Activated CD4-positive, alpha-beta T cell treated with anti-CD3 and anti-CD28 coated beads for 36 hours (primary cell): ENCODE measurements at regions of chr2 and their contacts with region 1.

Region 1: GRCh38 chr2:11583840-11584524 is 50.1 kb downstream of the GREB1 start:
- DNase-seq: peak; percentile 96
- ATAC-seq: peak; percentile 97
- H3K4me3 Mint-ChIP-seq: no peak overlapping the region
- H3K27ac Mint-ChIP-seq: no peak overlapping the region
- H3K4me1 Mint-ChIP-seq: peaks cover 18% of the 10 kb centered on the region
- H3K27me3 Mint-ChIP-seq: peaks cover 10% of the 10 kb centered on the region

Region 2: GRCh38 chr2:11154923-11155380 is 429.0 kb before region 1 on chr2:
- CTCF ChIA-PET with region 1: interaction called, 6 read pairs
- POLR2A ChIA-PET with region 1: no interaction called
- intact Hi-C with region 1: loop called in 1 of 2 experiments (anchors 1 kb)
- DNase-seq: peak; percentile 100
- ATAC-seq: peak; percentile 95
- H3K4me3 Mint-ChIP-seq: peak overlapping the region; percentile 73
- H3K27ac Mint-ChIP-seq: peak overlapping the region; percentile 83
- H3K4me1 Mint-ChIP-seq: peaks cover 15% of the 10 kb centered on the region
- H3K27me3 Mint-ChIP-seq: no peaks in the 10 kb centered on the region

Region 3: GRCh38 chr2:11344342-11344955 is 239.5 kb before region 1 on chr2 and contains the start of gene ROCK2:
- CTCF ChIA-PET with region 1: interaction called, 3 read pairs
- POLR2A ChIA-PET with region 1: no interaction called
- intact Hi-C with region 1: loop called in 1 of 2 experiments (anchors 2 kb)
- DNase-seq: peak; percentile 81
- ATAC-seq: peak; percentile 68
- H3K4me3 Mint-ChIP-seq: peak within 1 kb of the TSS; percentile 97
- H3K27ac Mint-ChIP-seq: peak within 1 kb of the TSS; percentile 89
- H3K4me1 Mint-ChIP-seq: peaks cover 31% of the 10 kb centered on the region
- H3K27me3 Mint-ChIP-seq: no peaks in the 10 kb centered on the region
- total RNA-seq, gene ROCK2: 14.4 to 16.7 TPM

Region 4: GRCh38 chr2:11456251-11456650 is 127.7 kb before region 1 on chr2:
- CTCF ChIA-PET with region 1: no interaction called
- POLR2A ChIA-PET with region 1: no interaction called
- intact Hi-C with region 1: no loop called
- DNase-seq: no peak
- ATAC-seq: peak; percentile 51
- H3K4me3 Mint-ChIP-seq: no peak overlapping the region
- H3K27ac Mint-ChIP-seq: peak overlapping the region; percentile 17
- H3K4me1 Mint-ChIP-seq: peaks cover 30% of the 10 kb centered on the region
- H3K27me3 Mint-ChIP-seq: no peaks in the 10 kb centered on the region

Region 5: GRCh38 chr2:11477994-11478393 is 106.0 kb before region 1 on chr2:
- CTCF ChIA-PET with region 1: interaction called, 133 read pairs
- POLR2A ChIA-PET with region 1: no interaction called
- intact Hi-C with region 1: loop called (anchors 1 kb)
- DNase-seq: peak; percentile 93
- ATAC-seq: peak; percentile 68
- H3K4me3 Mint-ChIP-seq: no peak overlapping the region
- H3K27ac Mint-ChIP-seq: no peak overlapping the region
- H3K4me1 Mint-ChIP-seq: peaks cover under 1% of the 10 kb centered on the region
- H3K27me3 Mint-ChIP-seq: peaks cover 27% of the 10 kb centered on the region

Region 6: DNA sequence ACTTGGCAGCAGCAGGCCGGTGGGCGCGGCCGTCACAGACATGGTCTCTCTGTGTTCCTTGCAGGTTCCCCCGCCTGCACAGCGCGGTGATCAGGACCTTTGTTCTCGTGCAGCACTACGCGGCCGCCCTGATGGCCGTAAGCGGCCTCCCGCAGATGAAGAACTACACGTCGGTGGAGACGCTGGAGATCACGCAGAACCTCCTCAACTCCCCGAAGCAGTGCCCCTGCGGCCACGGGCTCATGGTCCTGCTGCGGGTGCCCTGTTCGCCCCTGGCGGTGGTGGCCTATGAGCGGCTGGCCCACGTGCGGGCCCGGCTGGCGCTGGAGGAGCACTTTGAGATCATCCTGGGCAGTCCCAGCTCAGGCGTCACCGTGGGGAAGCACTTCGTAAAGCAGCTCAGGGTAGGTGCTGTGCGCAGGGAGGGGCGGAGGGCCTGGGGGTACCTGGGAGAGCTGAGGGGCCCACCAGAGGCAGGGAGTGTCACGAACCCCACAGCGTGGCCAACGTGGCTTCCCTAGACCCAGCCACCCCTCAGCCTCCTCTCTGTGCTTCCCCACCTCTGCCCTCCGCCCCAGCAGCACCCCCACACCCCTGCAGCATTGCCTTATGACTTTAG is 26.8 kb after region 1 on chr2:
- CTCF ChIA-PET with region 1: interaction called, 15 read pairs
- POLR2A ChIA-PET with region 1: no interaction called
- intact Hi-C with region 1: no loop called
- DNase-seq: no peak
- ATAC-seq: no peak
- H3K4me3 Mint-ChIP-seq: no peak overlapping the region
- H3K27ac Mint-ChIP-seq: no peak overlapping the region
- H3K4me1 Mint-ChIP-seq: no peaks in the 10 kb centered on the region
- H3K27me3 Mint-ChIP-seq: no peaks in the 10 kb centered on the region

Region 7: DNA sequence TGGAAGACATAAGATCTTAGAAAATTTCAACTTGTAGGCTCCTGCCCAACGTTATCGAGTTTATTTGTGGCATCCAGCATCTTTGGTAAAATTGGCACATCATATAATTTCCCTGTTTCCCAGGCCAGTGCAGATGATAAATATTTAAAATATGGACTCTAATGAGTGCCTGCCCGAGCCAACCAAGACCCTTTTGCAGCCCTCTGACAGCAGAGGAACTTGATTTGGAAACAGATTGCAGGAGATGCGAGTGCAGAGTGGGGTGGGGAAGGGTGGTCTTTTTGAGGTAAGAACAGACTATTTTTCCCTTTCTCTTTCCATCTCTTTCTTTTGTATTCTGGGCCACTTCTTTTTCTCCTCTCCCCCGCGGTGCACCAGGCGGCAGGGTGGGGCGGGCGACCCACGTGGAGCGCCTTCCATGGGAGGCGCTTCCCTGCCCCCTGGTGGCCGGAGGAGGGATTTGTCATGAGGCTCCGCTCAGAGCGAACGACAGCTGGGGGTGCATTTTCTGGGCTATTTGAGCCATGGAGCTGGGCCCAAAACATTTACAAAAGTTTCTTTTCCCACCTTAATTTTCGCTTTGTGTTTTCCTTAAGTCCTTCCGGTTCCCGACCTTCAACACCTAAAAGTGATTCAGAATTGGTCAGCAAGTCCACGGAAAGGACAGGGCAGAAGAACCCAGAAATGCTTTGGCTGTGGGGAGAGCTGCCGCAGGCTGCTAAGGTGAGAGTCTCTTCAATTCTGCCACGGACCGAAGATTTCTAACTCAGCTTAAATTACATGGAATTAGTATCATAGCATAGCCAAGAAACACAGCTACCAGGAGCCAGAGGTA is 195.2 kb after region 1 on chr2:
- CTCF ChIA-PET with region 1: no interaction called
- POLR2A ChIA-PET with region 1: no interaction called
- intact Hi-C with region 1: loop called in 1 of 2 experiments (anchors 5 kb)
- DNase-seq: peak; percentile 93
- ATAC-seq: peak; percentile 92
- H3K4me3 Mint-ChIP-seq: peak overlapping the region; percentile 49
- H3K27ac Mint-ChIP-seq: peak overlapping the region; percentile 75
- H3K4me1 Mint-ChIP-seq: peaks cover 41% of the 10 kb centered on the region
- H3K27me3 Mint-ChIP-seq: no peaks in the 10 kb centered on the region